ENCODE measurements at regions of chr2 and their contacts with region 1.

Region 1: DNA sequence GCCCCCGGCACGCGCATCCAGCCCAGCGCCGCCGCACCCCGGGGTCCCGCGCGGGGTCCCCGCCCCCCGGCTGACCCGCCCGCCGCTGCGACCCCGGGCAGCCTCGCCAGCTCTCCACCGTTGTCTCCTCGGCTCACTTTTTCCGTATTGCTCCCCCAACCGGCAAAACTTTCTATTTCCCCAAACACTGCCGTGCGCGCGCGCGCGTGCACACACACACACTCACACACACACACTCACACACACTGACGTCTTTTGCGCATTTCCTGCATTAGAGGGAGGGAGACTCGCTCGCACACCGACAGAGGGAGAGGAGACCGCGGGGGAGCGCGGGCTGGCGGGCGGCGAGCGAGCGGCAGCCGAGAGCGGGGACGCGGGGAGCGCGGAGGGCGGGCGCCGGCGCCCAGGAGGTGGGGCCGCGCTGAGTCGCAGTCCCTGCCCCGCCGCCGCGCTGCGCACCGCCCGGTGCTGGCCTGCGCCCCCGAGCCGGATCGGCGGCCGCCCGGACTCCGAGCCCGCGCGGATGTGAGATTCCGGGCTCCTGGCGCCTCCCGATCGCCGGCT is 542 bp upstream of the PRKCE start:
- DNase-seq: peak; percentile 95
- ATAC-seq: peak; percentile 91
- H3K4me3 ChIP-seq: peak overlapping the region; percentile 92
- H3K27ac ChIP-seq: peak overlapping the region; percentile 96
- H3K4me1 ChIP-seq: peaks cover 26% of the 10 kb centered on the region
- H3K27me3 ChIP-seq: no peaks in the 10 kb centered on the region
- CTCF ChIP-seq: peak; percentile 33

Region 2: DNA sequence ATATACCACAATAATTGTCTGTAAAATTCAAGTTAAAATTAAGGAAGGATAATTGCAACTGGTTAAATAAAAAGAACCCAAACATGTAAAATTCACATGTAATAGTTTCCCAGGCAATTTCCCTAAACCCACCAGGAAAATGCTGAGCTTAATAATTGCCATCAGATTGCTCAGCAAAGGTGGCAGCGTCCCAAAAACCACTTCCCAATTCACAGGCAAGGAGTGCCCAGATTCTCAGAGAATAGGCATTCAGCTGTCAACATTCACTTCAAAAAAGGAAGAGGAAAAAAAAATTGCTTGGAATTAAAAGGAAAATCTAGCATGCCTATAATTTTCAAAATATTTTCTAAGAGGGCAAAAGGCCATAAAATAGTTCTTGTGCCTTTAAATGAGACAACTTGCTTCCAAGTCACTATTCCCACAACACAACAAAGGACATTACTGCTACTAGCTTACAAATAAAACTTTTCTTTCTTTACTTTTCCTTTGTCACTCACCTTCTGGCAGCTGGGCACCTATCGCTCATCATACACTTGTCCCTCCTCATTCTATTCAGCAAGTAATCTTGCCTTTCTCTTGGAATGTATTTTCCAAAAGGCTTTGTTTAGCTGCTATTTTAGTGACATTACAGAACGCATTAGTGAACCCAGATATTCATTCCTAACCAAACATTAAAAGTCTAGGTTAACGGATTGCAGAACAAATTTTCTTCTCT is 55.1 kb before region 1 on chr2:
- intact Hi-C with region 1: no loop called
- DNase-seq: no peak
- ATAC-seq: peak; percentile 48
- H3K4me3 ChIP-seq: no peak overlapping the region
- H3K27ac ChIP-seq: no peak overlapping the region
- H3K4me1 ChIP-seq: peaks cover 14% of the 10 kb centered on the region
- H3K27me3 ChIP-seq: no peaks in the 10 kb centered on the region
- CTCF ChIP-seq: no peak

Region 3: DNA sequence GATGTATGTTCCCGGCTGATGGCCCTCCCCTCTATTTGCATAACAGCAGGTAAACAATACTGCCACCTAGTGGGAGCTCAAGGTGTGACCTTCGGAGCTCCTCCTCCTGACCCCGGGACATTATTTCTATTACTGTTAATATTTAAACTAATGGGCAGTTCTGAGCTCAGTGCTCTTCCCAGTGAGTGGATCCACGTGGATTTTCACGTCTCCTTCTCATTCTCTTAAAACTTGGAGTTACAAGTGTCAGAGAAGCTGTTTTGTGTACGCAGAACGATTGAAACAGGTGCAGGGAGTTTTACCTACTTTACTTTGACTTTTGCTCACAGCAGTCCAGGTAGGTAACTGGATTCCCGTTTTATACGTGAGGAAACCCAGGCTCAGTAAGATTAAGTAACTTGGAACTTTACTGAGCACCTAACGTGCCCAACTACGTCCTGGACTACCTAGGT is 127.8 kb after region 1 on chr2:
- intact Hi-C with region 1: loop called (anchors 10 kb)
- DNase-seq: no peak
- ATAC-seq: peak; percentile 91
- H3K4me3 ChIP-seq: no peak overlapping the region
- H3K27ac ChIP-seq: no peak overlapping the region
- H3K4me1 ChIP-seq: peaks cover 17% of the 10 kb centered on the region
- H3K27me3 ChIP-seq: no peaks in the 10 kb centered on the region
- CTCF ChIP-seq: peak; percentile 78

Measured in upper lobe of right lung (tissue), 1 donor.